Panc1 (cell line): ENCODE measurements at regions of chr2 and their contacts with region 1.

Region 1: DNA sequence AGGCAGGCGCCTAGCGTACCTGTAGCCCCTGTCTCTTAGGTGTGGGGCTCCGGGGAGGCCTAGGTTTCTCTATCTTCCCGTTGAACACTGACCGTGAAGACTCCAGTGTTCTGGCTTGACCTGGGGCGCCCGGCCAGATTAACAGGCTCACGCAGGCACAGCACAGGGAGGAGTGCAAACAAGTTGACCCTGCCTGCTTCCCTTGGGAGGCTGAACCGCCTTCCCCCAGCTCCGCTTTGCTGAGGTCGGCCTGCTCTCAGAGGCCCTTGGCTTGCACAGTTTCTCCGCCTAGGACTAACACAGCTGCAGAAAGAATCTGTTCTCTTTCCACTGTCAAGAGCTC is 566 bp downstream of the PCYOX1 start:
- DNase-seq: no peak
- ATAC-seq: peak; percentile 45
- H3K4me3 ChIP-seq: peak overlapping the region; percentile 69 to 98
- H3K27ac ChIP-seq: peak overlapping the region; percentile 25
- H3K4me1 ChIP-seq: 0 out of 2 replicates have a peak, but pooled peaks cover 5% of the 10 kb centered on the region
- H3K27me3 ChIP-seq: no peaks in the 10 kb centered on the region
- CTCF ChIP-seq: no peak

Region 2: GRCh38 chr2:68889500-68890185 is 1368.9 kb before region 1 on chr2:
- CTCF ChIA-PET with region 1: no interaction called
- POLR2A ChIA-PET with region 1: no interaction called
- in situ Hi-C with region 1: no loop called
- intact Hi-C with region 1: no loop called
- DNase-seq: no peak
- ATAC-seq: peak; percentile 48; the same call in 1 of the 2 replicates
- H3K4me3 ChIP-seq: no peak overlapping the region
- H3K27ac ChIP-seq: no peak overlapping the region
- H3K4me1 ChIP-seq: no peaks in the 10 kb centered on the region
- H3K27me3 ChIP-seq: peaks cover 2% of the 10 kb centered on the region
- CTCF ChIP-seq: no peak

Region 3: DNA sequence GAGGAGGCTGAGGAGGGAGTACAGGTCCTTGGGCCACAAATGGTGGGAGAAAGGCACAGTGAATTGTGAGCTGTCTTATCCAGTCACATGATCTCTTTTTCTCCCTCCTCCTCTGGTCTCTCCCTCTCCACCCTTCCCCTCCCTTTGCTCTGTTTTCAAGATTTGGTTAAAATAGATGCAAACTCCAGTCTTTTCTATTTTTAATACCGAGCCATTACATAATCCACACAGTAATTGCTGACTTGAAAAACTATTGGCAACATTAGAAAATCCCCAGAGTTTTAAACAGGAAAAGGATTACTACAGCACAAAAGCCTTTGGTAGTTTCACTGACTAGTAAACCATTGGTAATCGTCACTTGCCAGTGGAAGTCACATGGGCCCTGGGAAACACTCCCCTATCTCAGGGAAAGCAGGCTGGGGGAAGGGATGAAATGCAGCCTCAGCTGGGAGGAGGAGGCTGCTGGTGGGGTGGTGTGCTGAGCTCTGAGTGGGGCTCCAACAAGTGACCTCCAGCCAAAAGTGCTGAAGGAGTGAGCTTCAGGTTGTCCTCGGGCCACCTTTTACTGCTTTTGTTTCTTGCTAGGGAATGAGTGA is 228.6 kb before region 1 on chr2:
- CTCF ChIA-PET with region 1: no interaction called
- POLR2A ChIA-PET with region 1: no interaction called
- in situ Hi-C with region 1: no loop called
- intact Hi-C with region 1: no loop called
- DNase-seq: no peak
- ATAC-seq: no peak
- H3K4me3 ChIP-seq: no peak overlapping the region
- H3K27ac ChIP-seq: no peak overlapping the region
- H3K4me1 ChIP-seq: peaks cover 3% of the 10 kb centered on the region
- H3K27me3 ChIP-seq: no peaks in the 10 kb centered on the region
- CTCF ChIP-seq: no peak

Region 4: DNA sequence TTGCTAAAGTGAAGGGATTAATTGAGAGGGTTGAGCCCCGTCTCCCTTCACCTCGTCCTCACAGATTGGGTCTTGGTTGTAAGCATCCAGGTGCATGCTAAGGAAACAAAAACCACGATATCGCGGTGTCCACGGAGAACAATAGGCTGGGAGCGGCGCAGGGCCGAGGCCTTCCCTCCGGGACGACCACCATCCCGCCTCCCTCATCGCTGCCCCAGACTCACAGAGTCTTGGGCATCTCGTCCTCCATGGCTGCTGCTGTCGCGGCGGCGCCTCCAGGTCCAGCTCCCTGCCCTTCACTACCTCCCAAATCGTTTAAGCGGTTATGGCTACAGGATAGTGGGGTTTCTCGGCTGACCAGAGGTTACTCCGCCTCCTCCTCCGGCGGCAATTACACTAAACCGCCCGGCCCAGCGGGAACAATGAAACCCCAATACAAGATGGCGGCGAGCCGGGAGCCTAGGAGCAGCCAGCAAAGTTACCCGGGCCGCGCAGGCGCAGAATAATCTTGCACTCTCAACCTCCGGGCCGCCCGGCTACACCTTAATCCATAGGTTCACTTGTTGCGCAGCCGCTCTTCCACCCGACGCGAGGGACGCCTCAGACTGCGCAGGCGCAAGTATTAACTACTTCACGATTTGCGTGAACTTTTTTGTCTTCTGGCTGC is 10.2 kb before region 1 on chr2 and contains the start of gene TIA1:
- CTCF ChIA-PET with region 1: no interaction called
- POLR2A ChIA-PET with region 1: interaction called, 10 read pairs
- in situ Hi-C with region 1: no loop called
- intact Hi-C with region 1: no loop called
- DNase-seq: peak; percentile 96
- ATAC-seq: peak; percentile 99
- H3K4me3 ChIP-seq: peak within 1 kb of the TSS; percentile 83 to 91
- H3K27ac ChIP-seq: peak within 1 kb of the TSS; percentile 99
- H3K4me1 ChIP-seq: peaks cover 9% of the 10 kb centered on the region; the same call in 1 of the 2 replicates
- H3K27me3 ChIP-seq: no peaks in the 10 kb centered on the region
- CTCF ChIP-seq: no peak
- total RNA-seq, gene TIA1: 113 TPM

Region 5: DNA sequence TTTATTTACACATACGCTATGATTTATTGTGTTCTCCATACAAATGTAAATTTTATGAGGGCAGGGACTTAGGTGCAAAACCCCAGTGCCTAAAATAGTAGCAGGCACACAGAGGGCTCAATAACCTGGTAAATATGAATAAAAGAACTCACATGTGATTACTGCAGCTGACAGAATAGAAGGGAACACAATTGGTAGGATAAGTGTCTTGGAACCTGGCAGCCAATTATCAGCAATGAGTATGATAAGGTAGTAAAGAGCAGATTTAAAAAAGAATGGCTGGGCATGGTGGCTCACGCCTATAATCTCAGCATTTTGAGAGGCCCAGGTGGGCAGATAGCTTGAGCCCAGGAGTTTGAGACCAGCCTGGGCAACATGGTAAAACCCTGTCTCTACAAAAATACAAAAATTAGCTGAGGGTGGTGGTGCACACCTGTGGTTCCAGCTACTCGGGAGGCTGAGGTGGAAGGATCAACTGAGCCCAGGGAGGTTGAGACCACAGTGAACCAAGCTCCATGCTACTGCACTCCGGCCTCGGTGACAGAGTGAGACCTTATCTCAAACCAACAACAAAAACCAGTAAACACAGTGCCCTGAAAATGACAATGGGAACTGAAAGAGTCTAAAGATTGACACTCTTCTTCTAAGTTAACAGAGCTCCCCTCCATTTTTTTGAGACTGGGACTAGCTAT is 25.1 kb after region 1 on chr2:
- CTCF ChIA-PET with region 1: no interaction called
- POLR2A ChIA-PET with region 1: interaction called, 24 read pairs
- in situ Hi-C with region 1: no loop called
- intact Hi-C with region 1: no loop called
- DNase-seq: no peak
- ATAC-seq: no peak; the same call in 1 of the 2 replicates
- H3K4me3 ChIP-seq: no peak overlapping the region
- H3K27ac ChIP-seq: no peak overlapping the region
- H3K4me1 ChIP-seq: no peaks in the 10 kb centered on the region
- H3K27me3 ChIP-seq: no peaks in the 10 kb centered on the region
- CTCF ChIP-seq: no peak